ENCODE measurements at regions of chr9 and their contacts with region 1.

Region 1: GRCh38 chr9:72753266-72753893 is 199.5 kb downstream of the ALDH1A1 start:
- DNase-seq: peak; percentile 17
- H3K4me3 Mint-ChIP-seq: no peak overlapping the region
- H3K27ac Mint-ChIP-seq: no peak overlapping the region
- H3K4me1 Mint-ChIP-seq: peaks cover 12% of the 10 kb centered on the region
- H3K27me3 Mint-ChIP-seq: no peaks in the 10 kb centered on the region
- CTCF ChIP-seq: no peak

Region 2: GRCh38 chr9:72592502-72593403 is 160.6 kb before region 1 on chr9:
- CTCF ChIA-PET with region 1: no interaction called
- intact Hi-C with region 1: loop called (anchors 5 kb)
- DNase-seq: peak; percentile 7
- H3K4me3 Mint-ChIP-seq: no peak overlapping the region
- H3K27ac Mint-ChIP-seq: no peak overlapping the region
- H3K4me1 Mint-ChIP-seq: peaks cover 30% of the 10 kb centered on the region
- H3K27me3 Mint-ChIP-seq: no peaks in the 10 kb centered on the region
- CTCF ChIP-seq: peak; percentile 43

Region 3: GRCh38 chr9:72635197-72635596 is 118.2 kb before region 1 on chr9:
- CTCF ChIA-PET with region 1: no interaction called
- intact Hi-C with region 1: loop called (anchors 10 kb)
- DNase-seq: peak; percentile 6
- H3K4me3 Mint-ChIP-seq: no peak overlapping the region
- H3K27ac Mint-ChIP-seq: no peak overlapping the region
- H3K4me1 Mint-ChIP-seq: peaks cover 10% of the 10 kb centered on the region
- H3K27me3 Mint-ChIP-seq: no peaks in the 10 kb centered on the region
- CTCF ChIP-seq: no peak

Region 4: DNA sequence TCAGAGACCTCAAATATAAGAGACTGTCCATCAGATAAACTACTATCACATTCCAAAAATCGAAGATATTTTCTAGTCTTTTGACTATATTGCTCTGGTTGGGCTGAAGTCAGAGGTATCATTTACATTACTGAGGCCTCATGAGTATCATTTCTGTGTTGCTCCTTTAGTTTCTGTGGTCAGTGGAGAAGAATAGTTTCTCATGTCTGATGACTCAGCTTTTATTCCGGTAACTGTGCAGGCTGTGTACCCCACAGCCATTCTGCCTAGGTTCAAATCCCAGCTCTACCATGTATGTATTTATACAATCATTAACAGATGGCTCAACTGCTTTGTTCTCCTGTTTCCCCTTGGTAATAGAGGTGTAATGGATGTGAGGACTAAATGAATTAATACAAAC is 20.2 kb after region 1 on chr9:
- CTCF ChIA-PET with region 1: no interaction called
- intact Hi-C with region 1: no loop called
- DNase-seq: no peak
- H3K4me3 Mint-ChIP-seq: no peak overlapping the region
- H3K27ac Mint-ChIP-seq: no peak overlapping the region
- H3K4me1 Mint-ChIP-seq: no peaks in the 10 kb centered on the region
- H3K27me3 Mint-ChIP-seq: no peaks in the 10 kb centered on the region
- CTCF ChIP-seq: no peak

Region 5: GRCh38 chr9:73149371-73150067 is 396.1 kb after region 1 on chr9:
- CTCF ChIA-PET with region 1: no interaction called
- intact Hi-C with region 1: no loop called
- DNase-seq: no peak
- H3K4me3 Mint-ChIP-seq: peak overlapping the region; percentile 51
- H3K27ac Mint-ChIP-seq: peak overlapping the region; percentile 90
- H3K4me1 Mint-ChIP-seq: peaks cover 36% of the 10 kb centered on the region
- H3K27me3 Mint-ChIP-seq: no peaks in the 10 kb centered on the region
- CTCF ChIP-seq: no peak

Measured in Calu3 (cell line).